ENCODE measurements at regions of chr16 and their contacts with region 1.

Region 1: DNA sequence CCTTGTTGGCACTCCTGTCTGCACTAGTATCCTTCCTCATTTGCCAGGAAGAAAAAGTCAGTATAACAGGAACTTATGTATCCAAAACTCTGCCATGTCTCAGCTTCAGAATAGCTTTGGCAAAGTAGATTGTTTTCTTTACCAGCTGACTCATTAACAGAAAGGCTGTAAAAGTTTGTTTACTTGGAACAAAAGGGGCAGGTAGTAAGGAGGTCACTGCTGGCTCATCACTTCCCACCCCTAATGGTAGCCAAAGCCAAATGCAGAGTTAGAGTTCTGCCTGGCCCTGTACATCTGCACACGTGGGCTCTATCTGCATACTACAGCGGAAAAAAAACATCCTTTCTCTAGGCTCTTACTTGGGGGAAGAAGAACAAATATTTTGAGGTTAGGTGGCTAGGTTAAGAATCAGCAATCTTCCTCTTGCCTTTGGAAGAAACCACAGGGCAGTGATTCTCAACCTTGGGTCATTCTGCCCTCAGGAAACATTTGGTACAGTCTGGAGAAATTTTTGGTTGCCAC is 90.9 kb downstream of the CFDP1 start:
- DNase-seq: no peak
- ATAC-seq: peak; percentile 79
- H3K4me3 ChIP-seq: no peak overlapping the region
- H3K27ac ChIP-seq: peak overlapping the region; percentile 60 to 66
- H3K4me1 ChIP-seq: peaks cover 8 to 16% of the 10 kb centered on the region in 2 donors
- H3K27me3 ChIP-seq: no peaks in the 10 kb centered on the region

Region 2: DNA sequence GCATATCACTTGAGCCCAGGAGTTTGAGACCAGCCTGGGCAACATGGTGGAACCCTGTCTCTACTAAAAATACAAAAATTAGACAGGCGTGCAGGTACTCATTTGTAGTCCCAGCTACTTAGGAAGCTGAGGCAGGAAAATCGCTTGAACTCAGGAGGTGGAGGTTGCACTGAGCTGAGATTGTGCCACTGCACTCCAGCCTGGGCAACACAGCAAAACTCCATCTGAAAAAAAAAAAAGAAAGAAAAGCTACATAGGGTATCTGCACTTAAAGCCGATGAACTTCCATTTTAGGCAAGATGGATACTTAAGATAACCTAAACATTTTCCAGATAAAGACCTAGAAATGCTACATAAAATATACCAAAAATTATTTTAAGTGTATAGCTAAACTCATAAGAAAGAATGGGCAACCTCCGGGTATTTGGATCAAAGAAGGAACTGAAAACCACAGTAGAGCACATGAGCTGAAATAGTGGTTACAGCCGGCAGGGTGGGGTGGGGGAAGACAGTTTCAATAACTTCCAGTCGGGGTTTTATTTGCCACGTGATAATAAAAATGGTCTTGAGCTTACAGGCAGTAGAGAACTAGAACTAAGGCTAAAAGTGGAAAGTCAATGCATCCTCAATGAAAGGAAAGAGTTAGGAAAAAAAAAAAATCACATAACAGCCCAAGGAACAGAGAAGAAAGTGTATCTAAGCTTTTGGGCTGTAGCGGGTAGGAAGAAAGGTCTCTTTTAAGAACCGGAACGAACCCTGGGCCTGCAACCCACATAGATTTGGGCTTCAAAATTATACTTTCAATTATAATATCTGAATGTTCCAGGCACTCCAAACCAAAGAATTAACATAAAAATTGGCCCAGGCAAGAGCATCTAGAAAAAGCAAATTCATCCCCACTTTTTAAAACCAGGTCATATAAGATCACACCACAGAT is 37.8 kb after region 1 on chr16:
- intact Hi-C with region 1: loop called in 1 of 2 experiments (anchors 5 kb)
- DNase-seq: no peak
- ATAC-seq: no peak
- H3K4me3 ChIP-seq: no peak overlapping the region
- H3K27ac ChIP-seq: no peak overlapping the region
- H3K4me1 ChIP-seq: peaks cover 0 to 10% of the 10 kb centered on the region in 2 donors
- H3K27me3 ChIP-seq: no peaks in the 10 kb centered on the region

Region 3: GRCh38 chr16:75576384-75576811 is 234.0 kb after region 1 on chr16:
- intact Hi-C with region 1: no loop called
- DNase-seq: no peak
- ATAC-seq: no peak
- H3K4me3 ChIP-seq: no peak overlapping the region
- H3K27ac ChIP-seq: peak overlapping the region in 1 of 2 donors; percentile 38
- H3K4me1 ChIP-seq: peaks cover 0 to 2% of the 10 kb centered on the region in 2 donors
- H3K27me3 ChIP-seq: no peaks in the 10 kb centered on the region